Gastrocnemius medialis (tissue), 4 donors: ENCODE measurements at regions of chr2 and their contacts with region 1.

Region 1: GRCh38 chr2:174248187-174248997 is at the start of gene OLA1:
- DNase-seq: peak; percentile 89 to 92
- ATAC-seq: peak; percentile 91 to 95
- H3K4me3 ChIP-seq: peak within 1 kb of the TSS; percentile 68 to 88 (median 79)
- H3K27ac ChIP-seq: peak within 1 kb of the TSS; percentile 85 to 94 (median 90)
- H3K4me1 ChIP-seq: peaks cover 5 to 14% of the 10 kb centered on the region in 2 donors
- H3K27me3 ChIP-seq: no peaks in the 10 kb centered on the region
- CTCF ChIP-seq: no peak
- POLR2A ChIP-seq: peak; percentile 80 to 84
- total RNA-seq, gene OLA1: 75.4 to 111 (median 92.8) TPM

Region 2: DNA sequence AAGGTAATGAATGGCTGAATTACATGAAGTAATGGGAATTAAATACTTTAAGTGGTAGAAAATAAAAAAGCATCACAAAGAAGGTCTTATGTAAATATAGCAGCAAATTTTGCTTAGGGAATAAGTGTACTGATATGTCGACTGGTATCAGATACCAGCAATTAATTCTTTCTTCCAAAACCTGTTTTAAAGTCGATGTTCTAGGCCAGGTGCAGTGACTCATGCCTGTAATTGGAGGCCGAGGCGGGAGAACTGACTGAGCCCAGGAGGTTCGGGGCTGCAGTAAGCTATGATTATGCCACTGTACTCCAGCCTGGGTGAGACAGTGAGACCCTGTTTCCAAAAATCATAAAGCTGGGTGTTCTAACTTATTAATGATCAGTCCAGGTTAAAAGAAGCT is 313.5 kb before region 1 on chr2:
- in situ Hi-C with region 1: no loop called
- intact Hi-C with region 1: loop called (anchors 10 kb)
- DNase-seq: no peak
- ATAC-seq: no peak
- H3K4me3 ChIP-seq: no peak overlapping the region
- H3K27ac ChIP-seq: peak overlapping the region in 3 of 4 donors; percentile 1 to 12 (median 3)
- H3K4me1 ChIP-seq: peaks cover 45 to 46% of the 10 kb centered on the region in 2 donors
- H3K27me3 ChIP-seq: no peaks in the 10 kb centered on the region
- CTCF ChIP-seq: no peak
- POLR2A ChIP-seq: no peak

Region 3: GRCh38 chr2:174395284-174395968 is 147.0 kb after region 1 on chr2 and contains the start of gene SCRN3:
- in situ Hi-C with region 1: no loop called
- intact Hi-C with region 1: loop called (anchors 5 kb)
- DNase-seq: peak; percentile 72 to 74
- ATAC-seq: peak; percentile 97 to 98
- H3K4me3 ChIP-seq: peak within 1 kb of the TSS; percentile 86 to 89 (median 88)
- H3K27ac ChIP-seq: peak within 1 kb of the TSS; percentile 80 to 91 (median 87)
- H3K4me1 ChIP-seq: peaks cover 17 to 36% of the 10 kb centered on the region in 2 donors
- H3K27me3 ChIP-seq: no peaks in the 10 kb centered on the region
- CTCF ChIP-seq: no peak
- POLR2A ChIP-seq: peak; percentile 29 to 33
- total RNA-seq, gene SCRN3: 13.9 to 24.2 (median 20.7) TPM